ENCODE measurements at regions of chr16 and their contacts with region 1.

Region 1: GRCh38 chr16:86563489-86564345 is 2.9 kb upstream of the FOXC2 start:
- DNase-seq: peak; percentile 89
- ATAC-seq: peak; percentile 98
- H3K4me3 ChIP-seq: no peak overlapping the region
- H3K27ac ChIP-seq: no peak overlapping the region
- H3K4me1 ChIP-seq: peaks cover 7% of the 10 kb centered on the region
- H3K27me3 ChIP-seq: peaks cover 50% of the 10 kb centered on the region
- CTCF ChIP-seq: peak; percentile 100

Region 2: DNA sequence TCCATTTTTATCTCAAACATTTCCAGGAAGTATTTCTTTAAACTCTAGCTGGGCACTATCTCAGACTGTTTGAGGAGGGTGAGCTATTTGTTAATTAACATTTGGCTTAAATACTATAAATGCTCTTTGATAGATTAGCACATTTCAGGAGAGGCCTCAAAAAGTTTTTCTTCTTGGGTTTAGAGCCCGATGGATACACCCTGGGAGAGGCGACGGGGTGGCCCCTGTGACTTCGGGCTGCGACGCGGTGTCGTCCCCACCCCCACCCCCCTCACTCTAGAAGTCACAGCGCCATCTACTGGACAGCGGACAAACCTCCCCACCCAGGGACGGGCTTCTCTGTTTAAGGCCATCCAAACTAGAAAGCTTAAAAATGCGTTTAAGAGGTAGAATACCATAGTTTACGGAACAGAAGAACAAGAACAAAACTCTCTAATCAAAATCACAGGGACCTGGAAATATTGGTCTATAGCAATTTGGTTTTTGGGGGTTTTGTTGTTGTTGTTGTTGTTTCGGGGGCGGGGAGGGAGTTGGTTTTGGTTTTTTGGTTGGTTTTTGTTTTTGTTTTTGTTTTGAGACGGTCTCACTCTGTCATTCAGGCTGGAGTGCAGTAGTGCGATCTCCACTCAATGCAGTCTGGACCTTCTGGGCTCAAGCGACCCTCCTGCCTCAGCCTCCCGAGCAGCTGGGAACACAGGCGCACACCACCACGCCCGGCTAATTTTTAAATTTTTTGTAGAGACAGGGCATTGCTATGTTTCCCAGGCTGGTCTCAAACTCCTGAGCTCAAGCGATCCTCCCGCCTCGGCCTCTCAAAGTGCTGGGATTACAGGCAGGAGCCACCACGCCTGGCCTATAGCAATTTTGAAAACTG is 499.1 kb after region 1 on chr16:
- intact Hi-C with region 1: loop called (anchors 10 kb)
- DNase-seq: no peak
- ATAC-seq: peak; percentile 88
- H3K4me3 ChIP-seq: no peak overlapping the region
- H3K27ac ChIP-seq: no peak overlapping the region
- H3K4me1 ChIP-seq: no peaks in the 10 kb centered on the region
- H3K27me3 ChIP-seq: peaks cover 37% of the 10 kb centered on the region
- CTCF ChIP-seq: peak; percentile 74

Region 3: DNA sequence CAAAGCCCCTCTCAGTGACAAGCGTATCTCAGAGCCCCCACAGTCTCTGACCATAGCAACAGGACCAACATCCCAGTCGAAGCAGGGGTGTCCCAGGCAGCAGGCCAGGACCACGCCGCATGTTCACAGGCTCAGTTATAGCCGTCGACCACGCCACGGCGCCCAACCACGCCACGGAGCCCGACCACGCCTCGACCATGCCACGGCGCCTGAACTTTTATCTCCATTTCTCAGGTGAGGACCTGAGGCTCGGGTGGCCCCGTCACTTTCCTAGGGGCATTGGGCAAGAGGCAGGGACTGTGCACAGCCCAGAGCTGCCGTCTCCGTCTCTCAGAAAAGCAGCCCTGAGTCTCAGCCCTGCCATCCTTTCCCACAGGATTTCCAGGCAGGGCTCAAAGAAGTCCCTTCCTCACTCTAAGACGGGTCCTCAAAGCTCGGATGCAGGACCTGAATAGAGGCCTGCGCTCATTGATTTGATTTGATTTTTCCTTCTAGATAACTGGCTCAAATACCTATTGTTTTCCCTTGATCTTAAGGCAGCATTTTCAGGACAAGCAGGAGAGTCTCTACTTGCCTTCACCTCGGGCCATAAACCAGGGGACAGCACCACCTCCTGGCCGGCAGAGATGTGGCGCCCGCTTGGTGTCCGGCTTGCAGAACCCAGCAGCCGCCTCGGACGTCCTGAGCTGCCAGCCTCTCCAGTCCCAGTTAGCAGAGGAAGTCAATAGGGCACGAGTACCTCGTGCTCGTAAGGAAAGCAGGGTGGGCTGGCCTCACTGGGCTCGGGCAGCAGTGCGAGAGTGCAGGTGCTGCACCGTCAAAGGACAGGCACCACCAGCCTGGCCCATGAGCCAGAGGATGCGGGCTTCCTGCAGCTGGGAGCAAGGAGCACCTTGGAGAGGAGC is 714.7 kb after region 1 on chr16:
- intact Hi-C with region 1: loop called (anchors 5 kb)
- DNase-seq: peak; percentile 86
- ATAC-seq: peak; percentile 94
- H3K4me3 ChIP-seq: no peak overlapping the region
- H3K27ac ChIP-seq: no peak overlapping the region
- H3K4me1 ChIP-seq: no peaks in the 10 kb centered on the region
- H3K27me3 ChIP-seq: peaks cover 4% of the 10 kb centered on the region
- CTCF ChIP-seq: peak; percentile 88